ENCODE measurements at regions of chr10 and their contacts with region 1.

Region 1: DNA sequence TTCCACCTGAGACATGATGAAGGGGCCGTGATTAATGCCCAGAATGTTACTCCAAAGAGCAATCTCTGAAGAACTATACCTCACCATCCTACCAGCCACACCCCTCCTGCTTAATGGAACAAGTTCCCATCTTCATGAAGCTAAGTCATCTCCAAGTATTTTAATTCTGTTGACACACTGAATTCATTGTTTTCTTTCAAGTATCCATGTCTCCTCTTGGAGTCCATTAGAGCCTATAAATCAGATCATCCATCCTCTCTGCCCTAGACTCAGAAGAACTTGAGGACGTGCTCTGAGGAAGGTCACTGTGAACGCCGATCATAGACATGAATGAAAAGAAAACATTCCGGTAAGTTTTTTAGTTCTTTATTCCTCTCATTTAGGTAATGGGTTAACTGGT is 126.8 kb downstream of the RSU1 start:
- DNase-seq: no peak
- ATAC-seq: no peak
- H3K4me3 Mint-ChIP-seq: no peak overlapping the region
- H3K27ac Mint-ChIP-seq: no peak overlapping the region
- H3K4me1 Mint-ChIP-seq: no peaks in the 10 kb centered on the region
- H3K27me3 Mint-ChIP-seq: no peaks in the 10 kb centered on the region

Region 2: GRCh38 chr10:16566202-16566805 is 124.1 kb before region 1 on chr10:
- CTCF ChIA-PET with region 1: no interaction called
- POLR2A ChIA-PET with region 1: no interaction called
- intact Hi-C with region 1: no loop called
- DNase-seq: no peak
- ATAC-seq: no peak
- H3K4me3 Mint-ChIP-seq: no peak overlapping the region
- H3K27ac Mint-ChIP-seq: no peak overlapping the region
- H3K4me1 Mint-ChIP-seq: no peaks in the 10 kb centered on the region
- H3K27me3 Mint-ChIP-seq: peaks cover 17% of the 10 kb centered on the region

Region 3: DNA sequence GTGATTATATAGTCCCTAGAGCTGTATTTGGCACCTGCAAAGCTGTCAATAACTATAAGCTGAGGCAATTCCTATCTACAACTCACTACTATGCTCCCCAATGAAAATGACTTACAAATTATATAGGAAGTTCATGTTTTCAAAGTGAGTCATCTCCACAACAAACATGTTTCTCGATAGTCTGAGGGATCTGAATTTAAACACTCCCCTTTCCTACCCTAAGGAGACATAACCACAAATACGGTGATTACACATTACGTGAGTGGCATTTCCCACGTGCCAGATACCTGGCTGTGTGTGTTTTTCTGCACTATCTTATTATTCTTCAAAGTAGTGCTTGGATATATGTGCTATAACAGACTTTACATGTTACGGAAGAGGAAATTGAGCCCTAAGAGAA is 46.3 kb before region 1 on chr10:
- CTCF ChIA-PET with region 1: no interaction called
- POLR2A ChIA-PET with region 1: no interaction called
- intact Hi-C with region 1: loop called in 1 of 2 experiments (anchors 5 kb)
- DNase-seq: no peak
- ATAC-seq: peak; percentile 22
- H3K4me3 Mint-ChIP-seq: no peak overlapping the region
- H3K27ac Mint-ChIP-seq: no peak overlapping the region
- H3K4me1 Mint-ChIP-seq: peaks cover 14% of the 10 kb centered on the region
- H3K27me3 Mint-ChIP-seq: no peaks in the 10 kb centered on the region